Colonic mucosa (tissue), 4 donors: ENCODE measurements at regions of chr2 and their contacts with region 1.

Region 1: GRCh38 chr2:219206442-219207253 is at the start of gene ZFAND2B:
- DNase-seq: peak; percentile 97
- H3K4me3 ChIP-seq: peak within 1 kb of the TSS; percentile 57
- H3K27ac ChIP-seq: peak within 1 kb of the TSS; percentile 92
- H3K4me1 ChIP-seq: no peaks in the 10 kb centered on the region
- H3K27me3 ChIP-seq: no peaks in the 10 kb centered on the region
- CTCF ChIP-seq: no peak
- total RNA-seq, gene ZFAND2B: 65.5 to 74.6 TPM

Region 2: GRCh38 chr2:219177552-219178376 is 28.9 kb before region 1 on chr2 and contains the start of gene RETREG2:
- intact Hi-C with region 1: loop called (anchors 2 kb)
- DNase-seq: peak; percentile 92
- H3K4me3 ChIP-seq: peak within 1 kb of the TSS; percentile 76
- H3K27ac ChIP-seq: peak within 1 kb of the TSS; percentile 100
- H3K4me1 ChIP-seq: peaks cover 8% of the 10 kb centered on the region
- H3K27me3 ChIP-seq: no peaks in the 10 kb centered on the region
- CTCF ChIP-seq: no peak
- total RNA-seq, gene RETREG2: 94.4 to 116 TPM

Region 3: DNA sequence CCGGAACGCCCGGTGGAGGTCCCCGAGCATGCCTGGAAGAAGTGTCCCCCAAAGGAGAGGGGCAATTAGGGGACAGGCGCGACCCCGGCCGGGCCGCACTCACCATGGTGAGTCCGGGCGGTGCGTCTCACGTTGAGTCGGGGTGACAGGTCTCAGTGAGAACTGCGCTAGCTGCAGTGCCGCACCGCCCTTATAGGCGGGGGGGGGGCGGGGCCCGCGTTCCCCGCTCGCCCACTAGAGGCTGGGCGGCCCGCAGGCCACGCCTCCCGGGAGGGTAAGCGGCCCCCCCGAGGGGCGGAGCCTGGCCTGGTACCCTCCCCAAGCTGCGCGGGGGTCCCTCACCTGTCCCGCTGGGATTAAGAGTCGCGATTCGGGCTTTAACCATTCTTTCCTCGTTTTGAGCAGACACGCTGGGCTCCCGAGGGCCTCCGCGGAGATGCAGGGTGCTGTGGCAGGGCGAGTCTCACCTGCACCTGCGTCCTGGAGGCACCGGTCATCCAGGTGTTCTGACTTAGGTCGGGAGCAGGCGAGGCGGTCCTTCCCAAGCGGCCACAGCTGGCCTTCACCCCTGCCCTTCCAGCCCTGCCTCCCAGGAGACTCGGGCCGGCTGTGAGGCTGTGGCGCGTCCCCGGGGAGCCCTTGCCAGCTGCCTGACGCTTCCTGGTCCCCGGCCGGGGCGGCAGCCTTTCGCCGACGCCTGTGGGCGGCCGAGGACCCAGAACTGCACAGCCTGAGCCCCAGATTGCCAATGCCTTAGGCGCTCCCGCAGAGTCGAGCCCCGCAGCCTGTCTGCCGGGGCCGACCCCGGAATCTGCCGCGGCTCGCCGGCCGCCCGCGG is 47.3 kb after region 1 on chr2 and contains the start of gene TUBA4A:
- intact Hi-C with region 1: no loop called
- DNase-seq: peak; percentile 94
- H3K4me3 ChIP-seq: peak within 1 kb of the TSS; percentile 89
- H3K27ac ChIP-seq: peak within 1 kb of the TSS; percentile 81
- H3K4me1 ChIP-seq: peaks cover 26% of the 10 kb centered on the region
- H3K27me3 ChIP-seq: no peaks in the 10 kb centered on the region
- CTCF ChIP-seq: peak; percentile 15
- total RNA-seq, gene TUBA4A: 68.4 to 149 TPM

Region 4: DNA sequence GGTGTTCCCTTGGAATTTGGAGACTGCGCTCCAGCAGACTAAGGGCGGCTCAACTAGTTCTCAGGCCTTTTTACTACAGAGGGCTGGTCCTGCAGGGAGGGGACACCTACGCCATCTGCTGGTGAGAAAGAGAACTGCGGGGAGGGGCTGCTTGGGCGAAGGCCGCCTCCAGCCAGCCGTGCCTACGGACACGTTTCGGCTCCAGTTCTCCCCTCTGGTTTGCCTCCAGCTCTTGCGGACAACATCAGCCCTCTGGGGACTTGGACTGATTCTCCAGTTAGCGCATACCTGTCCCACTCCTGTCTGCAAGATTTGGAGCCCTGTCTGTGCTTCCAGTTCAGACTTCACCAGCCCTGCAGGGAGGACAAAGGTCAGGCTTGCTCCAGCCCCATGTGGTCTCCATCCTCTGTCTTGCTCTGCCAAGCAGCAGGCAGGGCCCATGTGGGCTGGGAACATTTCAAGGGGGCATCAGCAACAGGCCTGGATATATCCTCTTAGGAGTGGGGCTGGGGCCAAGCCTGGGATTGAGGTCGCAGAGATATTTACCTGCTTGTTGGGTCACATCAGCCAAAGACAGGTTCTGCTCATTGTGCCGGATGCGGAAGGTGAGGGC is 92.2 kb after region 1 on chr2:
- intact Hi-C with region 1: no loop called
- DNase-seq: peak; percentile 93
- H3K4me3 ChIP-seq: no peak overlapping the region
- H3K27ac ChIP-seq: no peak overlapping the region
- H3K4me1 ChIP-seq: no peaks in the 10 kb centered on the region
- H3K27me3 ChIP-seq: peaks cover 6% of the 10 kb centered on the region
- CTCF ChIP-seq: peak; percentile 100